Naive thymus-derived CD4-positive, alpha-beta T cell (primary cell): ENCODE measurements at regions of chr14 and their contacts with region 1.

Region 1: DNA sequence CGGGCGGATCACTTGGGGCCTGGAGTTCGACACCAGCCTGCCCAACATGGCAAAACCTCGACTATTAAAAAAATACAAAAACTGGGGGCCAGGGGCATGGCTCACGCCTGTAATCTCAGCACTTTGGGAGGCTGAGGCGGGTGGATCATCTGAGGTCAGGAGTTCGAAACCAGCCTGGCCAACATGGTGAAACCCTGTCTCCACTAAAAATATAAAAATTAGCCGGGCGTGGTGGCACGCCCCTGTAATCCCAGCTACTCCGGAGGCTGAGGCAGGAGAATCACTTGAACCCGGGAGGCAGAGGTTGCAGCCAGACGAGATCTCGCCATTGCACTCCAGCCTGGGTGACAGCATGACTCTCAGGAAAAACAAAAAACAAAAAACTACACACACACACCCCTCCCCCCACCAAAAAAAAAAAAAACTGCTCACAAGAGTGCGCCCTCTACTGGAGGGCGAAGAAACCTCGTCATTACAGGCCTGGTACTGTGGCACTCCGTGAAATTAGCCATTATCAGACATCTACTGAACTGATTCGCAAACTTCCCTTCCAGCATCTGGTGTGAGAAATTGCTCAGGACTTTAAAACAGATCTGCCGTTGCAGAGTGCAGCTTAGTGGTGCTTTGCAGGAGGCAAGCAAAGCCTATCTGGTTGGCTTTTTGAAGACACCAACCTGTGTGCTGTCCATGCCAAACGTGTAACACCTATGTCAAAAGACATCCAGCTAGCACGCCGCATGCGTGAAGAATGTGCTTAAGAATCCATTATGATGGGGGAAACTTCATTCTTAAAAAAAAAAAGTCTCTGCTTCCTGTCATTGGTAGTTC is 7.7 kb downstream of the PPP1R3E start:
- DNase-seq: peak; percentile 38 to 77 (median 66)
- ATAC-seq: peak; percentile 97
- H3K4me3 ChIP-seq: no peak overlapping the region
- H3K4me3 Mint-ChIP-seq: peak overlapping the region; percentile 3 to 87 (median 60)
- H3K27ac ChIP-seq: peak overlapping the region; percentile 51
- H3K27ac Mint-ChIP-seq: peak overlapping the region; percentile 35 to 96 (median 76)
- H3K4me1 ChIP-seq: peaks cover 0 to 11% of the 10 kb centered on the region in 2 donors
- H3K4me1 Mint-ChIP-seq: peaks cover 12 to 31% (median 28%) of the 10 kb centered on the region in 7 donors
- H3K27me3 ChIP-seq: no peaks in the 10 kb centered on the region
- H3K27me3 Mint-ChIP-seq: no peaks in the 10 kb centered on the region

Region 2: DNA sequence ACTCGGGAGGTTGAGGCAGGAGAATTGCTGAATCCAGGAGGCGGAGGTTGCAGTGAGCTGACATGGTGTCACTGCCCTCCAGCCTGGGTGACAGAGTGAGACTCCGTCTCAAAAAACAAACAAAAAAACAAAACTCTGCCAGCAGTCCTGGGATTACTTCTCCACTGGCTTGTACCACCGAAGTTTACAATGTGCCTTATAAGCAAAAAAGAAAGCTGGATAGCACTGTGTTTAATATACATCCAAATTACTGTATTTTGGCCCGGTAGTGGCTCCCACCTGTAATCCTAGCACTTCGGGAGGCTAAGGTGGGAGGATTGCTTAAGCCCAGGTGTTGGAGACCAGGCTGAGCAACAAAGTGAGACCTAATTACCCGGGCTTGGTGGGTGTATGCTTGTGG is 25.8 kb before region 1 on chr14:
- CTCF ChIA-PET with region 1: interaction called, 9 read pairs
- POLR2A ChIA-PET with region 1: interaction called, 3 read pairs
- intact Hi-C with region 1: loop called (anchors 1 kb)
- DNase-seq: no peak
- ATAC-seq: no peak
- H3K4me3 ChIP-seq: no peak overlapping the region
- H3K4me3 Mint-ChIP-seq: no peak overlapping the region
- H3K27ac ChIP-seq: no peak overlapping the region
- H3K27ac Mint-ChIP-seq: no peak overlapping the region
- H3K4me1 ChIP-seq: no peaks in the 10 kb centered on the region
- H3K4me1 Mint-ChIP-seq: no peaks in the 10 kb centered on the region
- H3K27me3 ChIP-seq: peaks cover 0 to 4% of the 10 kb centered on the region in 2 donors
- H3K27me3 Mint-ChIP-seq: peaks cover 0 to 18% (median 12%) of the 10 kb centered on the region in 5 donors